Activated CD8-positive, alpha-beta T cell treated with anti-CD3 and anti-CD28 coated beads, Interleukin-2, amount 10 ng/mL, durations not matched to agents 7 days and 5 days (primary cell): ENCODE measurements at regions of chr13 and their contacts with region 1.

Region 1: DNA sequence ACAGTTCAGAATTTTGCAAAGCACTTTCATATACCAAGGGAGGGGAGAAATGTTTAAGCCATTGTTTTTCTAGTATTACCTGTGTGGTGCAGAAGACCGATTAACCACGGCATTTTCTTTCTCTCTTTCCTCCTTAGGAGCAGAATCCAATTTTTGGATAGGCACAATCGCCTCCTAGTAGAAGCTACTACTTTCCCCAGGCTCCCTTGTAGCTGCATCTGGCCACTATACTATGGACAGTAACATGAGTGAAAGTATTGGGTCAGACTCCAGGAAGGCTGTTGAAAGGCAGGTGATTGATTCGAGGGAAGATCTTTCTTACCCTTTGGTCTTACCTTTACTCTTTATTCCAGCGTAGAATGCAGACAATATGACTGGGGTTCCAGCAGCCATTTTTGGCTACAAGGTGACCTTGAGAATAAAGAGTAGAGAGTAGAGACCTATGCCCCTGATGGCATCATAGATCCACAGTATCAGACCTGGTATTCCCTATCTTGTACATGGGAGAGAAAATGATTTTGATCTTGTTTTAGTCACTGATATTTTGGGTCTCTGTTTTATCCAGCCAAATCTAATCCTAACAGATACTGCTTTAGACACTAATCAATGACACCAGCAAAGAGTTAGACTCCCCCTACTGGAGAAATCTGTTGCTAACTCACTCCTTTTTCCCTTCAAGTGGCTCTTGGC is 77.0 kb downstream of the LRRC63 start:
- DNase-seq: peak; percentile 50
- ATAC-seq: peak; percentile 88
- H3K4me3 Mint-ChIP-seq: no peak overlapping the region
- H3K27ac Mint-ChIP-seq: peak overlapping the region; percentile 51
- H3K4me1 Mint-ChIP-seq: peaks cover 19% of the 10 kb centered on the region
- H3K27me3 Mint-ChIP-seq: no peaks in the 10 kb centered on the region

Region 2: GRCh38 chr13:46149272-46150133 is 139.2 kb before region 1 on chr13:
- CTCF ChIA-PET with region 1: interaction called, 11 read pairs
- POLR2A ChIA-PET with region 1: no interaction called
- DNase-seq: no peak
- ATAC-seq: peak; percentile 23
- H3K4me3 Mint-ChIP-seq: no peak overlapping the region
- H3K27ac Mint-ChIP-seq: peak overlapping the region; percentile 75
- H3K4me1 Mint-ChIP-seq: peaks cover 29% of the 10 kb centered on the region
- H3K27me3 Mint-ChIP-seq: no peaks in the 10 kb centered on the region

Region 3: GRCh38 chr13:46176756-46177155 is 112.0 kb before region 1 on chr13:
- CTCF ChIA-PET with region 1: interaction called, 30 read pairs
- POLR2A ChIA-PET with region 1: interaction called, 5 read pairs
- DNase-seq: peak; percentile 56
- ATAC-seq: no peak
- H3K4me3 Mint-ChIP-seq: peak overlapping the region; percentile 90
- H3K27ac Mint-ChIP-seq: peak overlapping the region; percentile 83
- H3K4me1 Mint-ChIP-seq: peaks cover 54% of the 10 kb centered on the region
- H3K27me3 Mint-ChIP-seq: no peaks in the 10 kb centered on the region

Region 4: GRCh38 chr13:46278474-46278873 is 10.2 kb before region 1 on chr13:
- CTCF ChIA-PET with region 1: interaction called, 10 read pairs
- POLR2A ChIA-PET with region 1: no interaction called
- DNase-seq: no peak
- ATAC-seq: no peak
- H3K4me3 Mint-ChIP-seq: no peak overlapping the region
- H3K27ac Mint-ChIP-seq: no peak overlapping the region
- H3K4me1 Mint-ChIP-seq: peaks cover 6% of the 10 kb centered on the region
- H3K27me3 Mint-ChIP-seq: no peaks in the 10 kb centered on the region